ENCODE measurements at regions of chr1 and their contacts with region 1.

Region 1: GRCh38 chr1:183416850-183417771 is 1.1 kb downstream of the NMNAT2 start:
- DNase-seq: peak; percentile 57 to 81 (median 65)
- ATAC-seq: peak; percentile 80 to 98 (median 96)
- H3K4me3 ChIP-seq: peak overlapping the region; percentile 17 to 54 (median 43)
- H3K27ac ChIP-seq: no peak overlapping the region
- H3K4me1 ChIP-seq: peaks cover 0 to 23% (median 16%) of the 10 kb centered on the region in 12 donors
- H3K27me3 ChIP-seq: peaks cover 0 to 73% (median 20%) of the 10 kb centered on the region in 9 donors
- CTCF ChIP-seq: no peak
- POLR2A ChIP-seq: no peak

Region 2: DNA sequence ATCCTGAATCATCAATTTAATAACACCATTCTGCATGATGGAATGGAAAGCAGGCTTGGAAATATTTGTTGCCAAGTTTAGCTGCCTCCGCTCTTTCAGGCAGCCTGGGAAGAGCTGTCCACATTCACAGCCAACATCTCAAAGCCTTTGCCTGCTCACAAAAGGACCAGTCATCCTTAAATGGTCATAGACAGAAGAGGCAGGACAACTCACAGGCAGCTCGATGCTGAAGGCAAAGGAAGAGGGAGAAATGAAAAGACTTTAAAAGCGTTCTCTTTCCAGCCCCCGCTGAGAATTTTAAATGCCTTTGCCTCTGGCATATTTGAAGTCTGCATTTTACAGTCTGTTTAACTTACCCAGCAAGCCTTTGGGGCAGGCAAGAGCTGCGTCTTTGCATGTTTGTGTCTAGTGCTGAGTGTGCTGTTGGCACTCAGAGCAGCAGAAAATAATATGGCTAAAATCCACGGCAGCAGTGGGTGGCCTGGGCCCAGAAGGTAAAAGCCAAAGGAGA is 67.9 kb before region 1 on chr1:
- intact Hi-C with region 1: loop called in 1 of 10 experiments (anchors 5 kb)
- DNase-seq: peak in 4 of 5 donors; percentile 20 to 35 (median 28)
- ATAC-seq: peak; percentile 54 to 88 (median 84)
- H3K4me3 ChIP-seq: no peak overlapping the region
- H3K27ac ChIP-seq: peak overlapping the region in 5 of 12 donors; percentile 8 to 60 (median 39)
- H3K4me1 ChIP-seq: peaks cover 0 to 24% (median 11%) of the 10 kb centered on the region in 12 donors
- H3K27me3 ChIP-seq: no peaks in the 10 kb centered on the region
- CTCF ChIP-seq: no peak
- POLR2A ChIP-seq: no peak